Panc1 (cell line): ENCODE measurements at regions of chr1 and their contacts with region 1.

Region 1: GRCh38 chr1:201766131-201766866 is 62.7 kb upstream of the IPO9 start:
- DNase-seq: no peak
- ATAC-seq: 0 out of 2 replicates have a peak, but pooled peaks have one; percentile 62
- H3K4me3 ChIP-seq: no peak overlapping the region
- H3K27ac ChIP-seq: no peak overlapping the region
- H3K4me1 ChIP-seq: no peaks in the 10 kb centered on the region
- H3K27me3 ChIP-seq: no peaks in the 10 kb centered on the region
- CTCF ChIP-seq: no peak

Region 2: GRCh38 chr1:200654660-200655059 is 1111.6 kb before region 1 on chr1:
- CTCF ChIA-PET with region 1: no interaction called
- POLR2A ChIA-PET with region 1: no interaction called
- in situ Hi-C with region 1: no loop called
- intact Hi-C with region 1: no loop called
- DNase-seq: no peak
- ATAC-seq: no peak
- H3K4me3 ChIP-seq: no peak overlapping the region
- H3K27ac ChIP-seq: no peak overlapping the region
- H3K4me1 ChIP-seq: no peaks in the 10 kb centered on the region
- H3K27me3 ChIP-seq: no peaks in the 10 kb centered on the region
- CTCF ChIP-seq: no peak

Region 3: DNA sequence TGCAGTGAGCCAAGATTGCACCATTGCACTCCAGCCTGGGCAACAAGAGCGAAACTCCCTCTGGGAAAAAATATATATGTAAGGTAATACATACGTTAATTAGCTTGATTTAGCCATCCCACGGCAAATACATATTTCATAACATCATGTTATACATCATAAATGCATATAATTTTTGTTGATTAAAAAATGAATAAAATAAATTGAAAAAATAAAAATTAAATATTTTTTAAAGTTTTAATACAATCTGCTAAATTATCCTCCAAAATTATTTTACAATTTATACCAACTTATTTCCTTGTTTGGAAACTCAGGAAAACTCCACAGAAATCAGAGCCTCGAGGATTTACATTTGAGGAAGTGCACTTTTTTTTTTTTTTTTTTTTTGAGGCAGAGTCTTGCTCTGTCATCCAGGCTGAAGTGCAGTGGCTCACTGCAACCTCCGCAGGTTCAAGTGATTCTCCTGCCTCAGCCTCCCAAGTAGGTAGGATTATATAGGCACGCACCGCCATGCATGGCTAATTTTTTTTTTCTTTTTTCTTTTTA is 50.1 kb after region 1 on chr1:
- CTCF ChIA-PET with region 1: interaction called, 14 read pairs
- POLR2A ChIA-PET with region 1: no interaction called
- in situ Hi-C with region 1: no loop called
- intact Hi-C with region 1: no loop called
- DNase-seq: no peak
- ATAC-seq: no peak
- H3K4me3 ChIP-seq: no peak overlapping the region
- H3K27ac ChIP-seq: no peak overlapping the region
- H3K4me1 ChIP-seq: no peaks in the 10 kb centered on the region
- H3K27me3 ChIP-seq: no peaks in the 10 kb centered on the region
- CTCF ChIP-seq: no peak